ENCODE measurements at regions of chr7 and their contacts with region 1.

Region 1: DNA sequence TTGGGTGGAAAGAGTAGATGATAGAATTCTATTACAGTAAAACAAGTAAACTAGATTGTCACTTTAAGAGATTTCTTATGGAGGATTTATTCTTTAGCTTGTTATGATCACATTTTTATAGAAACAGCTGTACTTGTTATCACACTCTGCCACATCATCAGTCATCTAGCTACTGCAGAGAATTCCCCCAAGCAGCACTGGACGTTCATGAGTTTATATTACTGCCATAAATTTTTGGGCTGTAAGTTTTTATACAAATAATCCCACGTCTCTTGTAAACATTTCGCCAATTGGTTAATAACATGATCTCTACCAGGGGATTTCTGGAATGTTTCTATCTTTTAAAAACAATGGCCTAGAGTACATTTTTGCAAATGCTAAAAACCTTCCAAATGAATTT is 238.8 kb downstream of the POLR1F start:
- DNase-seq: no peak
- ATAC-seq: no peak
- H3K4me3 ChIP-seq: no peak overlapping the region
- H3K4me3 Mint-ChIP-seq: no peak overlapping the region
- H3K27ac ChIP-seq: no peak overlapping the region
- H3K27ac Mint-ChIP-seq: no peak overlapping the region
- H3K4me1 ChIP-seq: no peaks in the 10 kb centered on the region
- H3K4me1 Mint-ChIP-seq: no peaks in the 10 kb centered on the region
- H3K27me3 ChIP-seq: no peaks in the 10 kb centered on the region
- H3K27me3 Mint-ChIP-seq: no peaks in the 10 kb centered on the region
- CTCF ChIP-seq: no peak

Region 2: GRCh38 chr7:19442016-19442785 is 27.8 kb before region 1 on chr7:
- CTCF ChIA-PET with region 1: no interaction called
- POLR2A ChIA-PET with region 1: no interaction called
- intact Hi-C with region 1: no loop called
- DNase-seq: peak in 1 of 9 experiments; percentile 6
- ATAC-seq: no peak
- H3K4me3 ChIP-seq: no peak overlapping the region
- H3K4me3 Mint-ChIP-seq: no peak overlapping the region
- H3K27ac ChIP-seq: no peak overlapping the region
- H3K27ac Mint-ChIP-seq: no peak overlapping the region
- H3K4me1 ChIP-seq: no peaks in the 10 kb centered on the region
- H3K4me1 Mint-ChIP-seq: no peaks in the 10 kb centered on the region
- H3K27me3 ChIP-seq: no peaks in the 10 kb centered on the region
- H3K27me3 Mint-ChIP-seq: no peaks in the 10 kb centered on the region
- CTCF ChIP-seq: no peak

Region 3: DNA sequence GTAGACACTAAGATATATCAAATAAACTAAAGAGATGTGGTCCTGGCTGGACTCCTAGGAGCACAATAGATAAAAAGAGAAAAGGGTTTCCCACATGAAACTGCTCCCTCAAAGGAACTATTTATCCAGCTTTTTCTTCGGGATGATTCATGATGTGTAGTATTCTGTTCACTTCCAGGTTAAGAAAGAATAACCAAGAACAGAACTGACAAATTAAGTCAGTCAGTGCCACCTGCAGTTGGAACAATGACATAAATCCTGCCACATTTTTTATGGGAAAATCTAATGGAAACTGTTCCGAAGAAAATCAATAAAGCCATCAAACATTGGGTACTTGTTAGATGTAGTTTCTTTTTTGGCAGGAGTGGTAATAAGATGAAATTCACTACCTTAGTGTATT is 151.7 kb after region 1 on chr7:
- CTCF ChIA-PET with region 1: no interaction called
- POLR2A ChIA-PET with region 1: no interaction called
- intact Hi-C with region 1: loop called in 1 of 2 experiments (anchors 5 kb)
- DNase-seq: no peak
- ATAC-seq: no peak
- H3K4me3 ChIP-seq: no peak overlapping the region
- H3K4me3 Mint-ChIP-seq: no peak overlapping the region
- H3K27ac ChIP-seq: no peak overlapping the region
- H3K27ac Mint-ChIP-seq: no peak overlapping the region
- H3K4me1 ChIP-seq: no peaks in the 10 kb centered on the region
- H3K4me1 Mint-ChIP-seq: no peaks in the 10 kb centered on the region
- H3K27me3 ChIP-seq: no peaks in the 10 kb centered on the region
- H3K27me3 Mint-ChIP-seq: no peaks in the 10 kb centered on the region
- CTCF ChIP-seq: no peak

Measured in CD8-positive, alpha-beta T cell (primary cell).